Activated CD4-positive, alpha-beta memory T cell treated with anti-CD3 and anti-CD28 coated beads for 36 hours (primary cell): ENCODE measurements at regions of chr13 and their contacts with region 1.

Region 1: DNA sequence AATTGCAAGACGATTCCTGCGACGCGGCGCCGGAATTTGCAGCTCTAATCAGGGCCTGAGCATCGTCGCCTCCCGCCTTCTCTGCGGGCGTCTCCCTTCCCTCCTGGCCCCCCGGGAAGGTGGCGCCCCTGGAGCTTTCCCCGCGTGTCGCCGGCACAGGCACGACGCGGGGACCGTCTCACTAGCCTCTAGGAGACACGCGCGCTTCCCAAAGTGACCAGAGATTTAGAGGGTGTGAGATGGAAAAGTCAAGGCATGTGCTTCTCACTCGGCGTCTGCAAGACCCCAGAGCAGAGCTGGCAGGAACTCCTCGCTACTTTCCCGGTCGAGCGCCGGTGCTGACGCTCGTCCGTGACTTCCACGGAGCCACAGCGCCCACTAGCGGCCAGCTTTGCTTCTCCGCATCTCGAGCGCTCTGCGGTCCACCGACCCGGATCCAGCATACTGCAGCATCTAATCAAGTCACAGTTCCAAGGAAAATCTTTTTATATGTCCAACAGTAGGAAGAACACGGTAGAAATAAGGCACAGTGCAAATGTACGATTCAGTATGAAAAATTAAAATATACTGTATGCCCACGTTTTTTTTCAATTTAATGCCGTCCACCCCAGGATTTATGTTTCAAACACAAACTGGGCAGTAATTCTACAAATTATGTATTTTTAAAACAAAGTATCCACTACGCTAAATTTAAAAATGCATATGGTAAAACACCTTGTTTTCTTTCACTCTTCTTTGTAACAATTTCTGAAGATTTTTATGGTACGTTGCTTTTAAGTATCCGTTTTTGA is 977 bp upstream of the EFNB2 start:
- DNase-seq: peak; percentile 87
- H3K4me3 Mint-ChIP-seq: peak overlapping the region; percentile 84
- H3K27ac Mint-ChIP-seq: peak overlapping the region; percentile 73
- H3K4me1 Mint-ChIP-seq: peaks cover 16% of the 10 kb centered on the region
- H3K27me3 Mint-ChIP-seq: peaks cover 26% of the 10 kb centered on the region

Region 2: GRCh38 chr13:105139380-105140285 is 1396.8 kb before region 1 on chr13:
- CTCF ChIA-PET with region 1: no interaction called
- POLR2A ChIA-PET with region 1: no interaction called
- intact Hi-C with region 1: loop called (anchors 10 kb)
- DNase-seq: peak; percentile 72
- H3K4me3 Mint-ChIP-seq: peak overlapping the region; percentile 89
- H3K27ac Mint-ChIP-seq: peak overlapping the region; percentile 95
- H3K4me1 Mint-ChIP-seq: peaks cover 18% of the 10 kb centered on the region
- H3K27me3 Mint-ChIP-seq: no peaks in the 10 kb centered on the region

Region 3: GRCh38 chr13:106493533-106494220 is 42.8 kb before region 1 on chr13:
- CTCF ChIA-PET with region 1: interaction called, 3 read pairs
- POLR2A ChIA-PET with region 1: no interaction called
- intact Hi-C with region 1: loop called (anchors 5 kb)
- DNase-seq: no peak
- H3K4me3 Mint-ChIP-seq: no peak overlapping the region
- H3K27ac Mint-ChIP-seq: no peak overlapping the region
- H3K4me1 Mint-ChIP-seq: peaks cover 13% of the 10 kb centered on the region
- H3K27me3 Mint-ChIP-seq: peaks cover 55% of the 10 kb centered on the region

Region 4: GRCh38 chr13:106567474-106568298 is 31.2 kb after region 1 on chr13 and contains the start of gene ARGLU1:
- CTCF ChIA-PET with region 1: interaction called, 57 read pairs
- POLR2A ChIA-PET with region 1: interaction called, 13 read pairs
- intact Hi-C with region 1: loop called (anchors 1 kb)
- DNase-seq: peak; percentile 97
- H3K4me3 Mint-ChIP-seq: peak within 1 kb of the TSS; percentile 98
- H3K27ac Mint-ChIP-seq: peak within 1 kb of the TSS; percentile 97
- H3K4me1 Mint-ChIP-seq: peaks cover 48% of the 10 kb centered on the region
- H3K27me3 Mint-ChIP-seq: no peaks in the 10 kb centered on the region
- total RNA-seq, gene ARGLU1: 81.0 to 87.1 TPM

Region 5: GRCh38 chr13:106587787-106588186 is 51.3 kb after region 1 on chr13:
- CTCF ChIA-PET with region 1: no interaction called
- POLR2A ChIA-PET with region 1: no interaction called
- intact Hi-C with region 1: no loop called
- DNase-seq: no peak
- H3K4me3 Mint-ChIP-seq: no peak overlapping the region
- H3K27ac Mint-ChIP-seq: no peak overlapping the region
- H3K4me1 Mint-ChIP-seq: no peaks in the 10 kb centered on the region
- H3K27me3 Mint-ChIP-seq: peaks cover 3% of the 10 kb centered on the region

Region 6: DNA sequence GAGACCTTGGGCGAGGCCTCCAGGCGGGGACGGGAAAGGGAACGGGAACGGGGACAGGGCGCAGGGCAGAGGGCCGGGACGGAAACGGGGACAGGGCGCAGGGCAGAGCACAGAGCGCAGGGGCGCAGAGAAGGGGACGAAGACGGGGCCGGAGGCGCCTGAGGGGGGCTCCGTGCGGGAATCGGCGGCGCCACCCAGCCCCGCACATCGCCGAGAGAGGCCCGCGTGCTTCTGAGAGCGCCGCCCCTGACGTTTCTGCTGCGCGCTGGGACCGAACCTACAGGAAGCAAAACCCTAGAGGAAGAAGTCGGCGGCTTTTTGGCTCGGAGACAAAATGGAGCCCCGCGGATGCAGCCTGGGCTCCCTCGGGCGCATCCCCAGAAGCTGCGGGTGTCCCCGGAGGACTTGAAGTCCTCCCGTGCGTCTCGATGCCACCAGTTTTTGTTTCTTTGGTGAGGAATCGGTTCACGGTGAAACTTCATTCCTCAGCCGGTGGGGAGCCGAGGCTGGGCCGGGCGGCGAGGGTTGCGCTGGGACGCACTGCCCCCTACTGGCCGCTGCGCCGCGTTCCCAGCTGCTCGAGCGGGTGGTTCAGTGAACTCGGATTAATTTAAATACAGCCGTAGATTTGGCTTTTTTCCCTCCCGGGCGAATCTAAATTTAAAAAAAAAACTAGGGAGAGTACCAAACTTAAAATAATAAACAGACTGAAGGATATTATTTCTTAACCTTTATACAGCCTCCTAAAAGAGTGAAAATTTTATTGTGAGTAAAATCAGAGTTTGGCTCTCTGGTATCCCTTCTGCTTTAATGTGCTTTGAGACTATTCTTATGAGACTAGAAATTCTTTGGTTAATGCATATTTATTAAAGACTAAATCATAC is 381.5 kb after region 1 on chr13:
- CTCF ChIA-PET with region 1: no interaction called
- POLR2A ChIA-PET with region 1: no interaction called
- intact Hi-C with region 1: loop called (anchors 2 kb)
- DNase-seq: peak; percentile 82
- H3K4me3 Mint-ChIP-seq: peak overlapping the region; percentile 75
- H3K27ac Mint-ChIP-seq: no peak overlapping the region
- H3K4me1 Mint-ChIP-seq: peaks cover 8% of the 10 kb centered on the region
- H3K27me3 Mint-ChIP-seq: peaks cover 24% of the 10 kb centered on the region

Region 7: GRCh38 chr13:107222597-107222996 is 686.2 kb after region 1 on chr13:
- CTCF ChIA-PET with region 1: no interaction called
- POLR2A ChIA-PET with region 1: no interaction called
- intact Hi-C with region 1: no loop called
- DNase-seq: no peak
- H3K4me3 Mint-ChIP-seq: no peak overlapping the region
- H3K27ac Mint-ChIP-seq: no peak overlapping the region
- H3K4me1 Mint-ChIP-seq: no peaks in the 10 kb centered on the region
- H3K27me3 Mint-ChIP-seq: no peaks in the 10 kb centered on the region